KBM-7 (cell line): ENCODE measurements at regions of chr5 and their contacts with region 1.

Region 1: DNA sequence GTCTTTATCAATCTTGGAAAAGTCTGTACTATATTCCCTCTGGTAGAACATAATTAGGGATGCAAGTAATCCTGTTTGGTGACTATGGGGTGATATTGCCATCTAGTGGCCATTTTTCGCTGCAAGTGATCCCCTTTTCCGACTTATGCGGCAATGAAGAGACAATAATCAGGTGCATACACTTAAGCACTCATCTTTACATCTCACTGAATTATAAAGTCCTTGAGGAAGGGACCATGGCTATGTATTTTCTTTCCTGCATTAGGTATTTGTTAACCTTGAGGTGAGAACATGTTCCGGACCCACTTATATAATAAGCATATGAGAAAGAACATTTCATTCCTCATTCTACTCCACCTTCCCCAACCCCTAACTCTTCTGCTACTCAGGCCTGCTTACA is 19.6 kb upstream of the LIX1 start:
- DNase-seq: peak; percentile 75

Region 2: GRCh38 chr5:96601811-96602244 is 560.2 kb before region 1 on chr5:
- in situ Hi-C with region 1: loop called (anchors 25 kb)
- DNase-seq: peak; percentile 64

Region 3: DNA sequence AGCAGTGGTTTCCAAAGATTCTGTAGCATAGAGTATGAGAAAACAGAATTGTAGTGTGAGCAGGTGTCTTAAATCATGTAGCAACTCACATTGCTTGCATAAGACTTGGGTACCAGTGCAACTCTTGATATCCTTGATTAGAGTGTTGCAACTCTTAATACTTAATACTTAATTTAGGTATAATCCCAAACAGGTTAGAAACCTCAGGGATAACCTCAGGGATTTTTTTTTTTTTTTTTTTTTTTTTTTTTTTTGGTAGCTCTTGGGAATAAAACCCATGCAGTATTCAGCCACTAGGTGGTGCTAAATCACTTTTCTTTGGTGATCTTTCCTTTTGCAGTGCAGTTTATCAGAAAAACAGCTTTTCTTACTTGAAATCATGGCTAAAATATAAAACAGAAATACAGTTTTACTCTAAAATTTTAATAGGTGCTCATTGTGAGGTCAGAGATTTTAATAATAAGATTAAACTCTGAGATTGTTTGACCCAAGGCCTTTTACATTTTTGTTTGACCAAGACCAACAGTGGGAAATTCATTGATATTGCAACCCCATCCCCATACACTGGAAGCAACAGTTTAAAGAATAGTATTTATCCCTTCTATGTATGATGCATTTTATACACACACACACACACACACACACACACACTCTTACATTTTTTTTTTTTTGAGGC is 409.6 kb before region 1 on chr5:
- in situ Hi-C with region 1: loop called (anchors 25 kb)
- DNase-seq: peak; percentile 64